HepG2 (cell line): ENCODE measurements at regions of chr4 and their contacts with region 1.

Region 1: GRCh38 chr4:78775303-78776030 is 683 bp upstream of the BMP2K start:
- DNase-seq: peak; percentile 71
- ATAC-seq: peak; percentile 73
- H3K4me3 ChIP-seq: peak overlapping the region; percentile 83 to 95 (median 95)
- H3K27ac ChIP-seq: peak overlapping the region; percentile 100
- H3K4me1 ChIP-seq: peaks cover 34% of the 10 kb centered on the region
- H3K27me3 ChIP-seq: no peaks in the 10 kb centered on the region; a peak in 1 of 5 replicates
- CTCF ChIP-seq: no peak
- EP300 ChIP-seq: 0 out of 4 replicates have a peak, but pooled peaks of 1 of the 2 experiments have one; percentile 24
- POLR2A ChIP-seq: peak; percentile 72 to 80
- RAD21 ChIP-seq: no peak

Region 2: DNA sequence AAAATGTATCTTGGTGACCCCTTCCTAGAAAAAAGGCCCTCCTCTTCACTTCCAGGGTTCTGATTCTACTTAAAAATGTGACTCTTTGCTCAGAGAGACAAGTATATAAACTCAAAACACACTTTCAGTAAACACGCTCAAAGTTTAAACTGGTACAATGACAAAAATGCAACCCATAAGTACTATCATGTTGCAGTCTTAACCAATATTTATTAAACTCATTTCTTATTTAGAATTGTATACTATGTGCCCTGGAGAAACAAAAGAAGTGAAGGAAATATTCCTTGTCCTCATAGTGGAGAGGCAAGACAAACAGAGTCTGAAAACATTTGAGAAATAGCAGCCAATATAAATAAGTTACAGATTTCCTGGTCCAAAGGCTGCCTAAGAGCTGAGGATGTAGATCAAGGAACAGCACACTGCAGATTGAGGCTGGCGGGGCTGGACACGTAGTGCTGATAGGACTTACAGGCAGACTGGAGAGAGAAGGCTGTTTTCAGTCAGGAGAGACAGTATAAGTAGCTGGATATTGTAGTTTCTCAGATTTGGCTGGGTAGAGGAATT is 263.0 kb before region 1 on chr4:
- CTCF ChIA-PET with region 1: no interaction called
- POLR2A ChIA-PET with region 1: no interaction called
- in situ Hi-C with region 1: no loop called
- intact Hi-C with region 1: no loop called
- DNase-seq: peak; percentile 10
- ATAC-seq: peak; percentile 72
- H3K4me3 ChIP-seq: no peak overlapping the region
- H3K27ac ChIP-seq: peak overlapping the region; percentile 54
- H3K4me1 ChIP-seq: peaks cover 36% of the 10 kb centered on the region
- H3K27me3 ChIP-seq: no peaks in the 10 kb centered on the region
- CTCF ChIP-seq: no peak
- EP300 ChIP-seq: no peak
- POLR2A ChIP-seq: no peak
- RAD21 ChIP-seq: no peak

Region 3: GRCh38 chr4:78612398-78613178 is 162.9 kb before region 1 on chr4:
- CTCF ChIA-PET with region 1: no interaction called
- POLR2A ChIA-PET with region 1: no interaction called
- in situ Hi-C with region 1: no loop called
- intact Hi-C with region 1: loop called (anchors 10 kb)
- DNase-seq: peak; percentile 21
- ATAC-seq: peak; percentile 54; the same call in 2 of the 3 replicates
- H3K4me3 ChIP-seq: no peak overlapping the region
- H3K27ac ChIP-seq: no peak overlapping the region
- H3K4me1 ChIP-seq: peaks cover 9% of the 10 kb centered on the region; the same call in 1 of the 2 replicates
- H3K27me3 ChIP-seq: no peaks in the 10 kb centered on the region
- CTCF ChIP-seq: peak; percentile 46; the same call in 1 of the 2 replicates
- EP300 ChIP-seq: no peak
- POLR2A ChIP-seq: no peak
- RAD21 ChIP-seq: peak; percentile 26; the same call in 1 of the 2 replicates

Region 4: GRCh38 chr4:78661921-78662521 is 113.4 kb before region 1 on chr4:
- CTCF ChIA-PET with region 1: no interaction called
- POLR2A ChIA-PET with region 1: interaction called, 4 read pairs
- in situ Hi-C with region 1: no loop called
- intact Hi-C with region 1: loop called (anchors 5 kb)
- DNase-seq: peak; percentile 88
- ATAC-seq: peak; percentile 96
- H3K4me3 ChIP-seq: no peak overlapping the region; a peak in 1 of 6 replicates
- H3K27ac ChIP-seq: peak overlapping the region; percentile 44
- H3K4me1 ChIP-seq: peaks cover 31% of the 10 kb centered on the region
- H3K27me3 ChIP-seq: no peaks in the 10 kb centered on the region
- CTCF ChIP-seq: no peak
- EP300 ChIP-seq: peak; percentile 31 to 75; a peak in 2 of 4 replicates
- POLR2A ChIP-seq: no peak
- RAD21 ChIP-seq: no peak